ENCODE measurements at regions of chrX and their contacts with region 1.

Region 1: DNA sequence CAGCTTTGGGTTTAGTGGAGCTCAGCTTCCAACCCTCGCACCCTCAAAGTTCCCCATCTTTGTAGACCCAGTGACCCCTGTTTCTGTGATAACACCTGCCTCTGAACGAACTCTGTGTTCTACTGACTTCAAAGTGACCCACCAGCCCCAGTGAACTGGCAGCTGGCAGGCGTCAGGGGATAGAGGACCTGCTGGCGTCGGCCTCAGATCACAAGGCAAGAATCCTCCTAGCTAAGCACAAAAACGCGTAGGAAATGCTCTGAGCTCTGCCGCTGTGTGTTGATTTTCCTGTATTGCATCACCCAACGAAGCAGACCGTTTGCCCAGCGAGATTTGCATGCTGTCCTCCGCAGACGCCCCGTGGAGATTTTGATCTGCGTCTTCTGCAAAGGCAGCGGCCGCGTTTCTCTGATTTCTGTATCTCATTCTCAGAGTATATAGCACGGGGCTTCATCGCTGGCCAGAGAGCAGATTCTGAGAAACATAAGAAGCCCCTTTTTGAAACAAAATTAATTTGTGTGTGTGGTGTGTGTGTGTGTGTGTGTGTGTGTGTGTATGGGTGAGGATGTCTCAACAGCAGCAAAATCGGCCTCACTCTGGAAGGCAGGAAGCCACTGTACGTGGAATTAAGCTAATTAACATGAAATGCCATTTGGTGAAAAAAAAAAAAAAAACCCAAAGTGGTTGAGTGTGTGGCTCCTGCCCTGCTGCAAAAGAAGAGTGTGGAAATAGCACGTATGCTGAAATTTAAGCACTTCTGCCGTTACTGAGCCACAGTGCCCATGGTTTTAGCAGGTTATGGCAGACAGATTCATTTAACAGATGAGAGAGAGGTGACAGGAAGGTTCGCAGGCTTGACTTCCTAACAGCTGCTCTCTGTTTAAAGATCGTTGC is 29.2 kb upstream of the ASMTL start:
- DNase-seq: peak; percentile 90
- ATAC-seq: peak; percentile 76
- H3K4me3 ChIP-seq: peak overlapping the region; percentile 68
- H3K27ac ChIP-seq: peak overlapping the region; percentile 96
- H3K4me1 ChIP-seq: peaks cover 59% of the 10 kb centered on the region
- H3K27me3 ChIP-seq: no peaks in the 10 kb centered on the region
- CTCF ChIP-seq: peak; percentile 14 to 20 (median 17); a peak in 1 of 6 replicates
- EP300 ChIP-seq: peak; percentile 78 to 88; a peak in 2 of 4 replicates
- POLR2A ChIP-seq: peak; percentile 77
- RAD21 ChIP-seq: peak; percentile 36; the same call in 1 of the 2 replicates

Region 2: DNA sequence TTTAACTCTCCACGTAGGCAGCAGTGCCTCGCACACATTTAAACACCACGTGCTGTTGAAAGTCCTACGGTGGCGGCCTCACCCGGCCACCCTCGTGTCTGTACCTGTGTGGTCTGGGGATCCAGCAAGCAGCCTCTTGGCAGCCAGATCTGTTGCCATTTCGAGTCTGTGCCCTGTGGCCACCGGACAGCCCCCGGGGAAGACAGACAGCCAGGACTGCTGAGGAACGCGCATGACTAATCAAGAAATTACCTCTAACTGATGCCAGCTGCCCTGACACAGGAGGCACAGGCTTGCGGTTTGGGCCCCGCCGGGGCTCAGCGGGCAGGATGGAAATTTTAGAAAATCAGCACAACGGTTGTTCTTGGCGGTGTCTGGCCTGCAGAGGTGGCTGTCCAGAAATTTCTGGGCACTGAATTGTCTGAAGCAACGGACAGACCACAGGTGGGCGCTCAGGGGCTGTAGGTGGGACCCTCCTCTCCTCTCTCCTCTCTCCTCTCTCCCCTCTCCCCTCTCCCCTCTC is 13.6 kb before region 1 on chrX:
- CTCF ChIA-PET with region 1: no interaction called
- POLR2A ChIA-PET with region 1: no interaction called
- RAD21 ChIA-PET with region 1: no interaction called
- SMC1A ChIA-PET with region 1: no interaction called
- in situ Hi-C with region 1: no loop called
- intact Hi-C with region 1: loop called (anchors 1 kb)
- DNase-seq: peak; percentile 83
- ATAC-seq: peak; percentile 77
- H3K4me3 ChIP-seq: no peak overlapping the region
- H3K27ac ChIP-seq: peak overlapping the region; percentile 82
- H3K4me1 ChIP-seq: peaks cover 43% of the 10 kb centered on the region
- H3K27me3 ChIP-seq: no peaks in the 10 kb centered on the region
- CTCF ChIP-seq: peak; percentile 24 to 60 (median 32); a peak in 4 of 6 replicates
- EP300 ChIP-seq: peak in 1 of 2 experiments; percentile 66; a peak in 2 of 4 replicates
- POLR2A ChIP-seq: 0 out of 2 replicates have a peak, but pooled peaks have one; percentile 40
- RAD21 ChIP-seq: peak; percentile 28

Region 3: DNA sequence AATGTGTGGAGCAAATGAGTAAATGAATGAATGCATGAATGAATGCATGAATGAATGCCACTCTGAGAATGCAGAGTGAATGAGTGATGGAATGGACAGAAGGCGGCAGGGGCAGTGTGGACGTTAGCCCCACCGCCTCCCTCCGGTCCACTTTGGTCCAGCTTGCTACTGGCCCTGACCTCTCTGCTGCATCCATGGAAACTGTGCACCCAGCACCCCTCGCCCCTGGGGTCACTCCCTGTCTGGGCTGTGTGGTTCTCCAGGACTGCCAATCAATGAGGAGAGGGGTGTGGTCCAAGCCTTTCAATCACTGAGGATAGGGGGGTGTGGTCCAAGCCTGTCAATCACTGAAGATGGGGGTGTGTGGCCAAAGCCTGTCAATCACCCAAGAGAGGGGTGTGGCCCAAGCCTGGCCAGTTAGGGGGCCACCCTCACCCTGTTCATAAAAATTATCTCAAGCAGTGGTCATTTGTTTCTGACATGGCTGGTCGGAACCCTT is 10.0 kb after region 1 on chrX:
- CTCF ChIA-PET with region 1: no interaction called
- POLR2A ChIA-PET with region 1: no interaction called
- RAD21 ChIA-PET with region 1: no interaction called
- SMC1A ChIA-PET with region 1: no interaction called
- in situ Hi-C with region 1: no loop called
- intact Hi-C with region 1: loop called (anchors 1 kb)
- DNase-seq: peak; percentile 87
- ATAC-seq: peak; percentile 81
- H3K4me3 ChIP-seq: no peak overlapping the region; the same call in 1 of the 2 replicates
- H3K27ac ChIP-seq: peak overlapping the region; percentile 44
- H3K4me1 ChIP-seq: peaks cover 34% of the 10 kb centered on the region
- H3K27me3 ChIP-seq: no peaks in the 10 kb centered on the region
- CTCF ChIP-seq: no peak
- EP300 ChIP-seq: no peak
- POLR2A ChIP-seq: 0 out of 2 replicates have a peak, but pooled peaks have one; percentile 46
- RAD21 ChIP-seq: no peak

Region 4: DNA sequence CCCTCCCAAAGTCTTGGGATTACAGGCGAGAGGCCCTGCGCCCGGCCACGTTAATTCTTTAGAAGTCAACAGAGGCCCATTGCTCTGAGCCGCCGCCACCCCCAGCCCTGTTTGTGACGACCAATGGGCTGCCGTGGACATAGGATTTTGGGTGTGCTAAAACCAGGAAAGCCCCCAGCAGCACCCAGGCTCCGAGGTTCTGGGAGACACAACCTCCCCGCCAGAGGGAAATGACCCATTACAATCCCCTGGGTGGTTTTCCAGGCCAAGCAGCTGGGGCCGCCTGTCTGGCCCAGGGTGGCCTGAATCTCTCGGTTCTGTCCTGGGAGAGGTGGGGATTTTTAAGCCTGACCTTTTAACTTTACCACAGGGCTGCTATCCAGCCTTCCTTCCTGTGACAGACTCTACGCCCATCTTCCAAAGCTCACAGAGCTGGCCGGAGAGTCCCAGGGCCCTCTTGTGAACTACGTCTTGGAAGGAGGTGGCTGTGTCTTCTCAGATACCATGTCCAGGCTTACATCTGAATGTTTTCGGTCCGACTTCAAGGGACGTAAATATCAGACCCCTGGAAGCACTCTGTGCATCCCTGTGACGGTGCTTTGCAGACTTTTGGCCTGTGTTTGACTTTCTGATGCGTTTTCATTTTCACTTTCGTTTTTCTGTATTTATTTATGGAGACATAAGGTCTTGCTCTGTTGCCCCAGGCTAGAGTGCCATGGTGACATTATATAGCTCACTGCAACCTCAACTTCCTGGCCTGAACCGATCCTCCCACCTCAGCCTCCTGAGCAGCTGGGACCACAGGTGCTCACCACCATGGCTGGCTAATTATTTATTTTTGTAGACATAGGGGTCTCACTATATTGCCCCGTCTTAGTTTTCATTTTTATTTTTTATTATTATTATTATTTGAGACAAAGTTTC is 19.1 kb after region 1 on chrX:
- CTCF ChIA-PET with region 1: no interaction called
- POLR2A ChIA-PET with region 1: no interaction called
- RAD21 ChIA-PET with region 1: no interaction called
- SMC1A ChIA-PET with region 1: no interaction called
- in situ Hi-C with region 1: no loop called
- intact Hi-C with region 1: loop called (anchors 1 kb)
- DNase-seq: peak; percentile 90
- ATAC-seq: peak; percentile 69
- H3K4me3 ChIP-seq: no peak overlapping the region
- H3K27ac ChIP-seq: peak overlapping the region; percentile 87
- H3K4me1 ChIP-seq: peaks cover 53% of the 10 kb centered on the region
- H3K27me3 ChIP-seq: no peaks in the 10 kb centered on the region
- CTCF ChIP-seq: no peak
- EP300 ChIP-seq: peak; percentile 49 to 71; a peak in 2 of 4 replicates
- POLR2A ChIP-seq: no peak
- RAD21 ChIP-seq: 0 out of 2 replicates have a peak, but pooled peaks have one; percentile 3

Region 5: DNA sequence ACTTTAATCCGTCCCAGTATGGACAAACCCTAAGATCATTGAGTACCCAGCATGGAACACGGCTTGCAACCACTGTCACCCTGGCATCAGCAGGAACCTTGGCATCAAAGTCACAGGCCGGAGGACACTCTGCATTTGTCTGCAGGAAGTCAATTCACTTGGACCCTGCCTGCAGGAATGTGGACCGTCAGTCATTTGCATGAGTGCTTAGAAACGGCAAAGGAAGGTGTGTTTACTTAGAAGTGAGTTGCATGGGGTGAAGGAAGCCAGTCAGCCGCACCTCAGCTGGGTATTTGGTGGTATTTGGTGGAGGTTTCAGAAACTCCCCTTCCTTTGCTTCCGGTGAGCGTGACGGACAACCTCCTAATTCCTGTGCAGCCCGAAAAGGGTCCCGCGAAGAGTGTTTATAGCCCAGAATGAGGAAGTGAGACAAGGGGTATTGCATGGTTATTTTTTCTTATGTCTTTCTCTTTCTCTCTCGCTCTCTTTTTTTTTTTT is 39.6 kb after region 1 on chrX:
- CTCF ChIA-PET with region 1: no interaction called
- POLR2A ChIA-PET with region 1: no interaction called
- RAD21 ChIA-PET with region 1: no interaction called
- SMC1A ChIA-PET with region 1: no interaction called
- in situ Hi-C with region 1: no loop called
- intact Hi-C with region 1: loop called (anchors 5 kb)
- DNase-seq: peak; percentile 99
- ATAC-seq: peak; percentile 92
- H3K4me3 ChIP-seq: peak overlapping the region; percentile 50; the same call in 1 of the 2 replicates
- H3K27ac ChIP-seq: peak overlapping the region; percentile 91
- H3K4me1 ChIP-seq: peaks cover 44% of the 10 kb centered on the region
- H3K27me3 ChIP-seq: no peaks in the 10 kb centered on the region
- CTCF ChIP-seq: no peak
- EP300 ChIP-seq: peak; percentile 98 to 99
- POLR2A ChIP-seq: peak; percentile 48
- RAD21 ChIP-seq: peak; percentile 33; the same call in 1 of the 2 replicates

Region 6: DNA sequence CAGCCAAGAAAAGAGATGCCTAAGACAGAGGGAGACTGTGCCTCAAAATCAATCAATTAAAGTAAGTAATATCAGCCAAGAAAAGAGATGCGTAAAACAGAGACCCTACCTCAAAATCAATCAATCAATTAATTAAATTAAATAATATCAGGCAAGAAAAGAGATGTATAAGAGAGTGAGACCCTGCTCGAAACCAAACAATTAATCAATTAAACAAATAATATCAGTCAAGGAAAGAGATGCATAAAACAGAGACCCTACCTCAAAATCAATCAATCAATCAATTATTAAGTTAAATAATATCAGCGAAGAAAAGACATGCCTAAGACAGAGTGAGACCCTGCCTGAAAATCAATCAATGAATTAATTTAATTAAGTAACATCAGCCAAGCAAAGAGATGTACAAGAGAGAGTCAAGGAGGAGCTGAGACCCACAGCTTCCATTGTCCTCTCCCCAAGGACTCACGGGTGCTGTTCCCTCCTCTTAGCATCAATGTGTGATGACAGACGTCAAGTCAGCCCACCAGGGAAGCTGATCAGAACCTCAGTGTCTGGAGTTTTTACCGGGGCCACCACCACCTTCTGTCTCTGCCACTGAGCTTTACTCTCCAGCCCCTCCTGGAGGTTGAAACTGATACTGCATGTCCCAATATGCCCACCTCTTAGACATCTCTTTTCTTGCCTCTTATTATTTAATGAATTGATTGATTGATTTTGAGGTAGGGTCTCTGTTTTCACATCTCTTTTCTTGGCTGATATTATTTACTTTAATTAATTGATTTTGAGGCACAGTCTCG is 99.0 kb after region 1 on chrX:
- CTCF ChIA-PET with region 1: no interaction called
- POLR2A ChIA-PET with region 1: no interaction called
- RAD21 ChIA-PET with region 1: no interaction called
- SMC1A ChIA-PET with region 1: no interaction called
- in situ Hi-C with region 1: no loop called
- intact Hi-C with region 1: loop called (anchors 5 kb)
- DNase-seq: no peak
- ATAC-seq: peak; percentile 67
- H3K4me3 ChIP-seq: no peak overlapping the region
- H3K27ac ChIP-seq: no peak overlapping the region
- H3K4me1 ChIP-seq: peaks cover 16% of the 10 kb centered on the region
- H3K27me3 ChIP-seq: no peaks in the 10 kb centered on the region
- CTCF ChIP-seq: peak; percentile 64 to 82 (median 81)
- EP300 ChIP-seq: no peak
- POLR2A ChIP-seq: no peak
- RAD21 ChIP-seq: peak; percentile 71

Measured in GM12878 (cell line).